ENCODE measurements at regions of chr3 and their contacts with region 1.

Region 1: DNA sequence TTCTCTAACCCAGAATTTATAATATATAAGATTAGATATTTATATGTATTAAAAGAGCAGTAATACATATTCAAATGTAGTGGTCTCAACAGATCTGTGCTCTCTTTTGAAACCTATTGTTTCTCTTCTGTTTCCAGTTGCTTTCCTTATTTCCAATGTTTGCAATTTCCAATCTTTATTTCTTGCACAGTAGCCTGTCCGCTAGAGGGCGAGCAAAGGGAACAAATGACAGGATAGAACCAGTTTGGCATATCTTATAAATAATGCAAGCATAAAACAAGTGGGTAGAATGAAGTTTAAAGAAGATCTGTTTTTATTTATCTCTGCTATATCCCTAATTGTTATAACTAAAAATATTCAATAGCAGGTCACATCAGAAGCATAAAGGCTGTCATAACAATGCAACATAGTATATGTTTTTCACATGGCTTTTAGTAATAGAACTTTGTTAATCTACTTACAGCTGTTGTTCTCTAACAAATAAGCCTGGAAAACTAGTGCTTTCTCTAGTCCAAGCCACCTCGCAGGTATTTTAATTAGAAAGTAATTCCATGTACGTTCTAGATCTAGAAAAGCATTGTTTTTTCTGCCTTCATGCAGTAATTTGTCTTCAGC is 15.1 kb upstream of the TCAIM start:
- DNase-seq: peak; percentile 30 to 83 (median 47)
- ATAC-seq: peak; percentile 88
- H3K4me3 ChIP-seq: no peak overlapping the region
- H3K27ac ChIP-seq: no peak overlapping the region
- H3K4me1 ChIP-seq: no peaks in the 10 kb centered on the region
- H3K27me3 ChIP-seq: no peaks in the 10 kb centered on the region
- CTCF ChIP-seq: peak; percentile 74 to 96 (median 84)
- EP300 ChIP-seq: no peak; the same call in 1 of the 2 replicates
- POLR2A ChIP-seq: no peak
- RAD21 ChIP-seq: peak; percentile 87 to 97

Region 2: GRCh38 chr3:44510000-44510368 is 186.5 kb after region 1 on chr3:
- CTCF ChIA-PET with region 1: interaction called, 4 read pairs
- POLR2A ChIA-PET with region 1: no interaction called
- in situ Hi-C with region 1: loop called (anchors 10 kb)
- intact Hi-C with region 1: loop called (anchors 5 kb)
- DNase-seq: peak; percentile 24 to 38 (median 30)
- ATAC-seq: peak; percentile 17
- H3K4me3 ChIP-seq: peak overlapping the region; percentile 91
- H3K27ac ChIP-seq: peak overlapping the region; percentile 67
- H3K4me1 ChIP-seq: peaks cover 5 to 17% of the 10 kb centered on the region in 2 experiments; a peak in 4 of 5 replicates
- H3K27me3 ChIP-seq: no peaks in the 10 kb centered on the region
- CTCF ChIP-seq: no peak
- EP300 ChIP-seq: no peak
- POLR2A ChIP-seq: no peak
- RAD21 ChIP-seq: no peak

Region 3: DNA sequence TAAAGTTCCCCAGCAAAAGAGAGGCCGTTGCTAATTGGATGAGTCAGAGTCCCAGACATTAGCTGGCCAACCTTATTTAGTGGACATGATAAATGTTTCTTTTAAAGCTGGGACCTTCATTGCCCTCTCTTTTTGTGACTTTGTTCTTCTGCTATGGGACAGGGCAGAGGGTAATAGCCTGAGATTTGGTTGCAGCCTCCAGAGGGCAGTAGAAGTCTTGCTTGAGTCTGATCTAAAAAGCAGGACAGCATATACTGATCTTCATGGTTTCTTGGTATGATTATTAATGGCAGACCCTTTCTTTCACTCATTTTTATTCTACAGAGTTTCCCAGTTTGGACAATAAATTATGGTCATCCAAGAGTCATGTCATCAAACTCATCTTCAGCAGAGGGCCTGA is 206.5 kb after region 1 on chr3:
- CTCF ChIA-PET with region 1: interaction called, 7 read pairs
- POLR2A ChIA-PET with region 1: no interaction called
- in situ Hi-C with region 1: no loop called
- intact Hi-C with region 1: loop called (anchors 1 kb)
- DNase-seq: peak in 1 of 4 experiments; percentile 37
- ATAC-seq: peak; percentile 76
- H3K4me3 ChIP-seq: no peak overlapping the region
- H3K27ac ChIP-seq: no peak overlapping the region
- H3K4me1 ChIP-seq: peaks cover 0 to 3% of the 10 kb centered on the region in 2 experiments; a peak in 1 of 5 replicates
- H3K27me3 ChIP-seq: peaks cover 0 to 8% of the 10 kb centered on the region in 2 experiments; a peak in 2 of 5 replicates
- CTCF ChIP-seq: peak; percentile 33 to 48 (median 43); a peak in 4 of 6 replicates
- EP300 ChIP-seq: no peak
- POLR2A ChIP-seq: no peak
- RAD21 ChIP-seq: peak in 1 of 2 experiments; percentile 34; a peak in 2 of 4 replicates

Region 4: GRCh38 chr3:44913868-44914468 is 590.5 kb after region 1 on chr3:
- CTCF ChIA-PET with region 1: interaction called, 7 read pairs
- POLR2A ChIA-PET with region 1: no interaction called
- in situ Hi-C with region 1: no loop called
- intact Hi-C with region 1: loop called (anchors 2 kb)
- DNase-seq: peak; percentile 81 to 85 (median 82)
- ATAC-seq: peak; percentile 93
- H3K4me3 ChIP-seq: no peak overlapping the region
- H3K27ac ChIP-seq: no peak overlapping the region
- H3K4me1 ChIP-seq: no peaks in the 10 kb centered on the region
- H3K27me3 ChIP-seq: peaks cover 0 to 5% of the 10 kb centered on the region in 2 experiments; a peak in 1 of 5 replicates
- CTCF ChIP-seq: peak; percentile 88 to 92 (median 90)
- EP300 ChIP-seq: no peak
- POLR2A ChIP-seq: no peak
- RAD21 ChIP-seq: peak; percentile 51 to 87